GM18951 (cell line): ENCODE measurements at regions of chrX and their contacts with region 1.

Region 1: DNA sequence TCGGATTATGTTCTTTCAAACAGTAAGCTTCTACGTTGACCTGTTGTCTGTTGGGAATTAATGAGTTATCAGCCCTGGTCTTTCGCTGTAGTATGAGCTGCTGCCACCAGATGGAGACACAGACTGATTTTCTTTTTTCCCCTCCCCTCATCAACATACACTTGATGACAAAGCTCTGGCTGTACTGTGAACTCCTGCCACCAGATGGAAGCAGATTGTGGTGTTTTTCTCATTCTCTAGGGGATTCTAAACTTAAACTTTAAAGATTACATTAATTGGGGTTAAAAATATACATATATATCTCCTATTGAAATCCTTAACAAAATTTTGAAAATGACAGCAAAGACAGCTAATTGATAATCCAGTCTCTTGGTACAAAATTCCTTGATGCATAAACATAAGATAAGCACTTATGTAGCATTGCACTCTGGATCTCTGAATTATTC is 44.8 kb downstream of the SMS start:
- POLR2A ChIP-seq: no peak

Region 2: DNA sequence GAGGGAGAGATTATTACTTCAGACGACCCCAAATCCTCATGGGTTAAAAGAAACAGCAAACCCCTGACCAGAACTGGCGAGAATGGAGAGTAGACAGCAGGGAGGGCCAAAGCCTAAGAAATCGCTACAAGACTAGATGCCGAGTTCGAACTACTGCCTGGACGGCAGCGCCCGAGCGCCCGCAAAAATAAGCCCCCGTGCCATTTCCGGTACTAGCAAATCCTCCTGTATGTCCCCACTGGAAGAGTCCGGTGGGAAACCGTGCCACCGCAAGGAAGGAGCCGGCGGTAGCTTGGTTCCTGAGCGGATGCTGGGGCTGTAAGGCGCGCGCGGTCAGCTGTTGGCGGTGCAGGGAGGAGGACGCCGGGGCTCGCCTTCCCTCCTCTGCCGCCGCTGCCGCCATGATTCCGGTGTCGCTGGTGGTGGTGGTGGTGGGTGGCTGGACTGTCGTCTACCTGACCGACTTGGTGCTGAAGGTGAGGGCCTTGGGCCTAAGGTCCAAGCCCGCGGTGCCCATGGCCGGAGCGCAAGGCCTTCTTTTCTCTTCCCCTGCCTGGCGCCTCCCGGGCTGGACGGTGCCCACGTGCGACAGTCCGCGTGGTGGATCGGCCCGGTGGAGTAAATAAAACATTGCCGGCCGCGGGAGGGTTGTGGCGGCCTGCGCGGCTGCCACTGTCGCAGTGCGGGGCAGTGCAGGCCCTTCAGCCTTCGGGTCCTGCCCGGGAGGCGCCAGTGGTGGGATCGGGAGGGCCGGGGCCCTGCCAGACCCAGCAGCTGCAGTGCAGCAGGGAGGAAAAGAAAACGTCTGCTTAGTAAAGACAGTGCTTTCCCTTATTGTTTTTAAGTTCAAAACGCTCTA is 145.8 kb before region 1 on chrX and contains the start of gene MBTPS2:
- in situ Hi-C with region 1: no loop called
- POLR2A ChIP-seq: peak; percentile 64

Region 3: DNA sequence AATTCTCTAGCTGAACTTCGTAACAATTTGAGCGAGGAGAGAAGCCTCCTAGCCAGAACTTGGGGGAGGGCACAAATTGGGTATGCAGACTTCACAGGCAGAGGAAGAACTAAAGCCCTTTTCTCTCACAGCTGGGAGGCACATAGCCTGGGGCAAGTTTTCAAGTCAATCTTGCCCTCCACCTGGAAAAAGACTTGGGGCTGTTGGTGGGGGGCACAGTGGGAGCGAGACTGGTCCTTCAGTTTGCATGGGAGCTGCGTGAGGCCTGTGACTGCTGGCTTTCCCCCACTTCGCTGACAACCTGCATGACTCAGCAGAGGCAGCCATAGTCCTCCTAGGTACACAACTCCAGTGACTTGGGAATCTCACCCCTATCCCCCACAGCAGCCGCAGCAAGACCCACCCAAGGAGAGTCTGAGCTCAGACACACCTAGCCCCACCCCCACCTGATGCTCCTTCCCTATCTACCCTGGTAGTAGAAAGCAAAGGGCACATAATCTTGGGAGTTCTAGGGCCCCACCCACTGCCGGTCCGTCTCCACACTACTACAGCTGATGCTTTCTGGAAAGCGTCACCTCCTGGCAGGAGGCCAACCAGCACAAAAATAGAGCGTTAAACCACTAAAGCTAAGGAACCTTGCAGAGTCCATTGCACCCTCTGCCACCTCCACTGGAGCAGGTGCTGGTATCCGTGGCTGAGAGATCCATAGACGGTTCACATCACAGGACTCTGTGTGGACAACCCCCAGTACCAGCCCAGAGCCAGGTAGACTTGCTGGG is 448.1 kb after region 1 on chrX:
- in situ Hi-C with region 1: no loop called
- POLR2A ChIP-seq: no peak

Region 4: DNA sequence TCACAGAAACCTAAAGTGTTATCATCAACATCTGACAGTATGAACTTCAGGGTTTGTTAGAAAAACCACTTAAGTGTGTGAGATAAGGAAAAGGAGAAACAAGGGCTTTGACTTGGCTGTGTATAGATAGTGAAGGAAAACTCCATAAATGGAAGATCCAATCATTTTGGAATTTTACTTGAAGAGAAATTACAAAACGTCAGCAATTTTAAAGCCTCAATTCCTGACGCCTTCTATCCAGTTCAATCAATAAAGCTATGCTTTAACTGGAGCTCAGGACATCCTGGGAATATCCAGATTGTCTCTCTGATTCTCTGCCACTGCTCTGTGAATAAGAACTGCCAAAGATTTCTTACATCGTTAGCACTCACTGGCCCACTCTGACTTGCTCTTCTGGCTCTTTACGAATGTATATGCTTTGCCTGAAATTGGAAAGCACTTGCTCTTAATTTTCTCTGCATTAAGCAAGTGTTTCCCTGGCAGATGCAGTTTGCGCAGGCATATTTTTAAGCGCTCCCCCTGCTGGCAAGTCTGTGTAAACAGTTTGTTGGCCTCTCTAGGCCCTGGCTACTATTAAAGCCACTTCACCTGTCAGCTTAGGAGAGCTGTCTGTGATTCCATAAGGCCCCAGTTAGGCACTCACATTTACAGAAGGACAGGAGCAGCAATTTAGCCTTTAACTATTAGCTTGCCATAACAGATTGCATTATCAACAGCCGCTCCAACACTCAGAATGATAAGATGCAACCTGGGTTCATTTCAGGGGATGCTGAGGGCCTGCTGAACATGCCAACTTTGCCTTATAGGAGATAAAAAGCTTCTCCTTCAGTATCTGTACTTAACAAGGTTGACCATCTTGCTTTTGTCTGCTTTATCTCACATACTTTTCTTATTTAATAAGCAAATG is 763.0 kb after region 1 on chrX:
- in situ Hi-C with region 1: loop called (anchors 25 kb)
- POLR2A ChIP-seq: no peak